ENCODE measurements at regions of chr5 and their contacts with region 1.

Region 1: DNA sequence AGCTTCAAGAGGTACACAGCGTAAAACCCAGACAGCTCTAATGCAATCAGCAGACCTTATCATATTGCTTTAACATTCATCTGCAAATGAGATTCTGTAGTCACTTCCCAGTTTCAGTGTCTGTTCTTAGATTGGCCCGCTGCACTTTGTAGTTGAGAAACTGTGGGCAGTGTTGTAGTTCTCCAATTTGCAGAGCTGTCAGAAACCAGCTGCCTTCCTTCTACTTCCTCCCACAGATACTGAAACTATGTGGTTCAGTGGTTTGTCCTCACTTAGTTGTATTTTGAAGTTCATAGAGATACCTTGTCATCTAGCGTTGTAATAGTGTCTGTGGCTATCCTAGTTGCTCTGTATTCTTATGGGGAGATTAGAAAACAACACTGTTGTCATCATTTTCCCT is 39.6 kb upstream of the TRIM36 start:
- DNase-seq: peak in 3 of 14 experiments; percentile 61 to 72 (median 63)
- ATAC-seq: peak; percentile 83
- H3K4me3 ChIP-seq: no peak overlapping the region
- H3K4me3 Mint-ChIP-seq: no peak overlapping the region
- H3K27ac ChIP-seq: no peak overlapping the region
- H3K27ac Mint-ChIP-seq: peak overlapping the region; percentile 1
- H3K4me1 ChIP-seq: no peaks in the 10 kb centered on the region
- H3K4me1 Mint-ChIP-seq: peaks cover 16% of the 10 kb centered on the region
- H3K27me3 ChIP-seq: no peaks in the 10 kb centered on the region
- H3K27me3 Mint-ChIP-seq: no peaks in the 10 kb centered on the region
- CTCF ChIP-seq: no peak

Region 2: GRCh38 chr5:115229606-115230005 is 20.3 kb after region 1 on chr5:
- CTCF ChIA-PET with region 1: no interaction called
- POLR2A ChIA-PET with region 1: no interaction called
- intact Hi-C with region 1: loop called in 1 of 2 experiments (anchors 2 kb)
- DNase-seq: no peak
- ATAC-seq: no peak
- H3K4me3 ChIP-seq: no peak overlapping the region
- H3K4me3 Mint-ChIP-seq: no peak overlapping the region
- H3K27ac ChIP-seq: no peak overlapping the region
- H3K27ac Mint-ChIP-seq: no peak overlapping the region
- H3K4me1 ChIP-seq: no peaks in the 10 kb centered on the region
- H3K4me1 Mint-ChIP-seq: no peaks in the 10 kb centered on the region
- H3K27me3 ChIP-seq: no peaks in the 10 kb centered on the region
- H3K27me3 Mint-ChIP-seq: no peaks in the 10 kb centered on the region
- CTCF ChIP-seq: no peak

Region 3: GRCh38 chr5:115333164-115333563 is 123.9 kb after region 1 on chr5:
- CTCF ChIA-PET with region 1: no interaction called
- POLR2A ChIA-PET with region 1: no interaction called
- intact Hi-C with region 1: no loop called
- DNase-seq: peak in 1 of 14 experiments; percentile 26
- ATAC-seq: no peak
- H3K4me3 ChIP-seq: no peak overlapping the region
- H3K4me3 Mint-ChIP-seq: no peak overlapping the region
- H3K27ac ChIP-seq: no peak overlapping the region
- H3K27ac Mint-ChIP-seq: no peak overlapping the region
- H3K4me1 ChIP-seq: no peaks in the 10 kb centered on the region
- H3K4me1 Mint-ChIP-seq: no peaks in the 10 kb centered on the region
- H3K27me3 ChIP-seq: peaks cover 0 to 6% of the 10 kb centered on the region in 2 experiments
- H3K27me3 Mint-ChIP-seq: peaks cover 14% of the 10 kb centered on the region
- CTCF ChIP-seq: no peak

Region 4: GRCh38 chr5:115586601-115587048 is 377.3 kb after region 1 on chr5:
- CTCF ChIA-PET with region 1: no interaction called
- POLR2A ChIA-PET with region 1: no interaction called
- intact Hi-C with region 1: no loop called
- DNase-seq: peak in 3 of 14 experiments; percentile 31 to 46 (median 44)
- ATAC-seq: no peak
- H3K4me3 ChIP-seq: no peak overlapping the region
- H3K4me3 Mint-ChIP-seq: no peak overlapping the region
- H3K27ac ChIP-seq: no peak overlapping the region
- H3K27ac Mint-ChIP-seq: no peak overlapping the region
- H3K4me1 ChIP-seq: no peaks in the 10 kb centered on the region
- H3K4me1 Mint-ChIP-seq: no peaks in the 10 kb centered on the region
- H3K27me3 ChIP-seq: no peaks in the 10 kb centered on the region
- H3K27me3 Mint-ChIP-seq: no peaks in the 10 kb centered on the region
- CTCF ChIP-seq: peak; percentile 74

Measured in CD4-positive, alpha-beta T cell (primary cell).